PC-9 (cell line): ENCODE measurements at regions of chr16 and their contacts with region 1.

Region 1: GRCh38 chr16:4253394-4254150 is 11.7 kb upstream of the SRL start:
- DNase-seq: peak; percentile 93 to 100
- H3K4me3 ChIP-seq: peak overlapping the region; percentile 83
- H3K27ac ChIP-seq: peak overlapping the region; percentile 61
- H3K4me1 ChIP-seq: no peaks in the 10 kb centered on the region
- H3K27me3 ChIP-seq: no peaks in the 10 kb centered on the region
- CTCF ChIP-seq: no peak

Region 2: DNA sequence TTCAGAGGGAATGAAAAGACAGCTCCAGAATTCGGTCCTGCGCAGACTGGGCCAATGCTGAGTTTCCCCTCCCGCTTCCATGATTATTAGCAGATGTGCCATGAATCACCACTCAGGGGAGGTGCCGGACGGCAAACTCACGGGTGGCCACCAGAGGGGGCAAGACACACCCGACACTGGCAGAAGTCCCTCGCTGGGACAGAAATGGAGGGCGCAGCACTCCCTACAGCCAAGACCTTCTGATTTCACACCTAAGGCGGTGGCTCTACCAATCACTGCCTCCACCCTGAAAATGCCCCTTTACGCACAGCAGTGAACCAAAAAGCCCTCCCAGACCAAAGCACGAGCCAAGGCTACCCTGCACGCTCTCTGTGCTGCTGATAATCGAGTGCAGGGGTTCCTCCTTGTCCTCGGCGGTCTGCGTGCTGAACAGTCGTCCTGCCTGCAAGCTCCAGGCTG is 563.1 kb before region 1 on chr16:
- CTCF ChIA-PET with region 1: no interaction called
- POLR2A ChIA-PET with region 1: no interaction called
- intact Hi-C with region 1: loop called (anchors 10 kb)
- DNase-seq: peak; percentile 54 to 86
- H3K4me3 ChIP-seq: no peak overlapping the region
- H3K27ac ChIP-seq: no peak overlapping the region
- H3K4me1 ChIP-seq: no peaks in the 10 kb centered on the region
- H3K27me3 ChIP-seq: no peaks in the 10 kb centered on the region
- CTCF ChIP-seq: peak; percentile 84

Region 3: GRCh38 chr16:3983081-3983520 is 270.5 kb before region 1 on chr16:
- CTCF ChIA-PET with region 1: interaction called, 21 read pairs
- POLR2A ChIA-PET with region 1: interaction called, 6 read pairs
- intact Hi-C with region 1: loop called (anchors 1 kb)
- DNase-seq: peak; percentile 64 to 91
- H3K4me3 ChIP-seq: no peak overlapping the region
- H3K27ac ChIP-seq: no peak overlapping the region
- H3K4me1 ChIP-seq: no peaks in the 10 kb centered on the region
- H3K27me3 ChIP-seq: no peaks in the 10 kb centered on the region
- CTCF ChIP-seq: peak; percentile 82

Region 4: GRCh38 chr16:4136229-4136813 is 117.3 kb before region 1 on chr16:
- CTCF ChIA-PET with region 1: interaction called, 9 read pairs
- POLR2A ChIA-PET with region 1: interaction called, 4 read pairs
- intact Hi-C with region 1: loop called (anchors 1 kb)
- DNase-seq: peak; percentile 95 to 97
- H3K4me3 ChIP-seq: peak overlapping the region; percentile 9; the same call in 1 of the 2 replicates
- H3K27ac ChIP-seq: peak overlapping the region; percentile 84
- H3K4me1 ChIP-seq: peaks cover 11% of the 10 kb centered on the region
- H3K27me3 ChIP-seq: no peaks in the 10 kb centered on the region
- CTCF ChIP-seq: no peak; the same call in 1 of the 2 replicates

Region 5: DNA sequence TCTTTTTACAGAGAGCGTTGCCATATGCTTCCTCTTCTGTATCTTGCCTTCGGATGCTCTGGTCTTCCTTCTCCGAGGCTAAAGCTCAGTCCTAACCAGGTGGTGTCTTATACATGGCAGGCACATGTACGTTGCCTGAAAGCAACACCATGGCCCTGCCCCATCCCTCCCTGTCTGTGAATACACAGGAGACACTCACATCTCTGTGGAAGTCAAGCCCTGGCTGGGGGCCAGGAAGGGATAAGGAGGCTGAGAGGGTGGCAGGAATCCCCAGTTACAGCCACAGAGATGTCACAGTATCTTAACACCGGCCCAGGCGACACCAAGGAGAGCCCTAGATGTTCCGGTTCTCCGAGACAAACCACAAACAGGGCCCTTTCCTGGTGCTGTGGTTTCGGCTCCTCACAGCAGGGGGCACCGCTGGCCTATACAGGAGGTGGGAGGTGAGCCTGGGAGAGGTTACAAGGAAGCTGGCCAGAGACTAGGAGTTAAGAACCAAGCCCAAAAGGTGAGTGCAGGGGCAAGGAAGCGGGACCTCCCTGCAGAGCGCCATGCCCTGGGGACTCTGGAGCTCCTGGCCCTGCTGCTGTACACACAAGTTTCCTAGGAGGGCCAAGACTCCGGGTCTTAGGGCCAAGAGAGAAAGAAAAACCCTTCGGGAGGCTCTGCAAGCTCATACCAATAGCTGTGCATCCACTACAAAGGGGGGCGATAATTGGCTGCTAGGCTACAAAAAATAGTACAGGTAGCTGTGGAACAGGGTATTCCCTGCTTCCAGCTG is 53.4 kb before region 1 on chr16:
- CTCF ChIA-PET with region 1: interaction called, 47 read pairs
- POLR2A ChIA-PET with region 1: interaction called, 4 read pairs
- intact Hi-C with region 1: loop called (anchors 1 kb)
- DNase-seq: peak; percentile 73 to 88
- H3K4me3 ChIP-seq: no peak overlapping the region
- H3K27ac ChIP-seq: no peak overlapping the region
- H3K4me1 ChIP-seq: peaks cover 7% of the 10 kb centered on the region
- H3K27me3 ChIP-seq: no peaks in the 10 kb centered on the region
- CTCF ChIP-seq: peak; percentile 70

Region 6: GRCh38 chr16:4271176-4272066 is 17.8 kb after region 1 on chr16:
- CTCF ChIA-PET with region 1: interaction called, 16 read pairs
- POLR2A ChIA-PET with region 1: interaction called, 35 read pairs
- intact Hi-C with region 1: loop called (anchors 1 kb)
- DNase-seq: peak; percentile 82 to 94
- H3K4me3 ChIP-seq: peak overlapping the region; percentile 81
- H3K27ac ChIP-seq: peak overlapping the region; percentile 92
- H3K4me1 ChIP-seq: peaks cover 7% of the 10 kb centered on the region
- H3K27me3 ChIP-seq: no peaks in the 10 kb centered on the region
- CTCF ChIP-seq: no peak

Region 7: DNA sequence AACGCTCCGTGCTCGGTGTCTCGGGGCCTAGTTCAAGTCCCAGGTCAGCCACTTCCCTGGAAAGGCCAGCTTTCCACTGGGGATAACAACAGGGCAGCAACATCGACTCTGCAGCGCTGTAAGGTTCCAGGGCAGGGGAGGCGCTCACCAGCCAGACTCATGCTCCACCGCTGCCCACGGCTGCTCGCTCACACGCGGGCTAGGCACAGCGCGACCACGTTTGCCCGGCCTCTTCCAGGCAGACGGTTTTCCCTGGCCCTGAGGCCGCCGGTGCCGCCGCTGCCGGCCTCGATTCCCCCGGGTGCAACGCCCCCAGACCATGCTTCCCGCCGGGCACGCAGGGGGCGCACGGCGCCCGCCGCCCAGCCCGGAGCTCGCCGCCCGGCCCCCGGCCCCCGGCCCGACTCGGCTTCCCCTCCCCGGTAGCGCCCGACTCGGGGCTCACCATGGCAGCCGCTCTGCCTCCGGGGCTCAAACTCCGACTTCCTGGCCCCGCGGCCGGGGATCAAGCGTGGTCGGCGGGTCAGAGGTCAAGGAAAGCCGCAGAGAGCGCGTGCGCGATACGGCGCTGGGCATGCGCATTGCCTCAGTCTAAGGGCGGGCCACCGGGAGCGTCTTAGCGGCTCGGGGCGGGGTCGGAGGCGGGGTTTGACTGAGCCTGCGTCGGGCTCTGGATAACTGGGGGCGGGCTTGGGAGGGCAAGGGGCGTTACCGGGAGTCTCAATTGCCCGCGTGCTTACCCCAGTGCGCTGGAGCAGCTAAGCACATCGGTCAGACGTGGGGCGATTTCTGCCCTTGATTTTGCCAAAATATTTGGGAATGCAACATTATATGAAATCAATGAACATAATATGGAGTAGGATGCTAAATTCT is 97.5 kb after region 1 on chr16 and contains the start of gene PAM16:
- CTCF ChIA-PET with region 1: no interaction called
- POLR2A ChIA-PET with region 1: no interaction called
- intact Hi-C with region 1: no loop called
- DNase-seq: peak; percentile 84 to 99
- H3K4me3 ChIP-seq: peak within 1 kb of the TSS; percentile 89
- H3K27ac ChIP-seq: peak within 1 kb of the TSS; percentile 69
- H3K4me1 ChIP-seq: peaks cover 32% of the 10 kb centered on the region
- H3K27me3 ChIP-seq: no peaks in the 10 kb centered on the region
- CTCF ChIP-seq: no peak
- total RNA-seq, gene PAM16: 95.9 and 110 TPM in 2 replicates